OCI-LY7 (cell line): ENCODE measurements at regions of chr2 and their contacts with region 1.

Region 1: GRCh38 chr2:24490674-24491625 is at the start of gene NCOA1:
- DNase-seq: peak; percentile 90
- H3K4me3 ChIP-seq: peak within 1 kb of the TSS; percentile 70
- H3K27ac ChIP-seq: peak within 1 kb of the TSS; percentile 59
- H3K4me1 ChIP-seq: peaks cover 22% of the 10 kb centered on the region
- CTCF ChIP-seq: 0 out of 2 replicates have a peak, but pooled peaks have one; percentile 4
- total RNA-seq, gene NCOA1: 4.3 and 6.1 TPM in 2 replicates

Region 2: DNA sequence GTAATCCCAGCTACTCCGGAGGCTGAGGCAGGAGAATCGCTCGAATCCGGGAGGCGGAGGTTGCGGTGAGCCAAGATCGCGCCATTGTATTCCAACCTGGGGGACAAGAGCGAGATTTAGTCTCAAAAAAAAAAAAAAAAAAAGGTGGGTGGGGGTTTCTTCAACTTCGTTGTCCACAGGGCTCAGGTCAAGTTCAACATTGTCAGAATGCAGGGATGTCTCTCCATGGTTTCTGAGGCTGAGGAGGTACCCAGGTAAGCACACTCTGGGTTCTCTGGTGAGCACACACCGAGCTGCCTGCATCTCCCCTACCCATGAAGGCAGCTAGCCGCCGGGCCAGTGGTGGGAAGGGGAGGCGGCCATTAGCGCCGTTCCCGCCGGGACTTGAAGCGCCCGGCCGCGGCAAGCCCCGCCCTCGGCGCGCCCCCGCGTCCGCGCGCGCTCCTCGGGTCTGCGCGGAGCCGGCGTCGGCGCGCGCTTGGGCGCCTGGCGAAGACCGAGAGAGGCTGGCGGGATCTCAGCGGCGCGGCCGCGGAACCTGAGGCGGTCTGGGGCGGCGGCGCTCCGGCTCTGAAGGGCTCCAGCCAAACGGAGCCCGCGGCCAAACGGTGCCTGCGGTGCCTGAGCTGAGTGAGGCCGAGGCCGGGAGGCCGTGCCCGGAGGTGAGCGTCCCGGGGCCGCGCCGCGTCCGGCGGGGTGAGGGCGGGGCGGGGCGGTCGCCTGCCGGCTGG is 550.8 kb before region 1 on chr2 and contains the start of gene UBXN2A:
- CTCF ChIA-PET with region 1: no interaction called
- POLR2A ChIA-PET with region 1: no interaction called
- intact Hi-C with region 1: loop called (anchors 10 kb)
- DNase-seq: peak; percentile 89
- H3K4me3 ChIP-seq: peak within 1 kb of the TSS; percentile 72
- H3K27ac ChIP-seq: peak within 1 kb of the TSS; percentile 73
- H3K4me1 ChIP-seq: peaks cover 18% of the 10 kb centered on the region
- CTCF ChIP-seq: no peak
- total RNA-seq, gene UBXN2A: 10.0 and 11.3 TPM in 2 replicates

Region 3: GRCh38 chr2:24792874-24793760 is 302.2 kb after region 1 on chr2 and contains the starts of genes CENPO and PTRHD1:
- CTCF ChIA-PET with region 1: no interaction called
- POLR2A ChIA-PET with region 1: interaction called, 4 read pairs
- intact Hi-C with region 1: loop called (anchors 5 kb)
- DNase-seq: peak; percentile 97
- H3K4me3 ChIP-seq: peak within 1 kb of the TSS; percentile 91
- H3K27ac ChIP-seq: peak within 1 kb of the TSS; percentile 82
- H3K4me1 ChIP-seq: peaks cover 30% of the 10 kb centered on the region
- CTCF ChIP-seq: peak; percentile 54
- total RNA-seq, gene CENPO: 52.4 and 53.6 TPM in 2 replicates
- total RNA-seq, gene PTRHD1: 44.8 and 55.0 TPM in 2 replicates

Region 4: DNA sequence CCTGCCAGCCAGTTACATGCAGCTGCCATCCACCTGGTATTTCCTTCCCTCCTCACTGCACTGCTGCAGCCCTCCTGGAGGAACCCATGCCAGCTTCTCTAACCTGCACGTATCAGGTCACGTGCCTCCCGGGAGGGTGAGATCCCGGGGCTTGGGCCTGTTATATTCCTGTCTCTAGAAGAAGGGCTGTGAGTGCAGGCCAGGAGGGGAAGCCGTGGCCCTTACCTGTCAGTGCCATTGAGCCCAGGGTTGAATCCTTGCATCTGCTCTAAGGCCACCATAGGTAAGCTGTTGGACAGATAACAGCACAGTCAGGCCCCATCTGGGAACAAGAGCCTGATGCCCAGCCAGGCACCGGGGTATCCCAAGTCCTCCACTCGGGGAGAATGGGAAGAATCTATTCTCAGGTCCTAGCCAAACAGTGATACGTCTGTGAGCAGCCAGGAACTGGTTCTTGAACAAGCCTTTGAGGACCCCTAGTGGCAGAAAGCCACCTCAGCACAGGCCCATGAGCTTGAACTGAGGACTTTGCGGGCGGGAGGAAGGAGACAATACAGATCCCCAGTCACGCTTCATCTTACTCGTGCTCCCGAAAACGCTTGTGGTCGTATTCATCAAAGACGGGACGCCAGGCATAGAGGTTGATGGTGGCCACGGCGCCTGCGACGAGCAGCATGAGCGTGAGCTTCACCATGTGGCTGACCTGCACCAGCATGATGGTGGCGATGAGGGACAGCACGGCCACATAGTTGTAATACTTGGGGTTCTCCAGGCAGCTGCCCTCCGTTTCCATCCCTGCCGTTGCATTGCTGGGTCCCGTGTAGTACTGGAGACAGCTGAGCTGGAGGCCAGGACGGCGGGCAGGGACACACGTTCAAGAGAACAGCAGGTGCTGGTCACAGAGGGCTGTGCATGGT is 336.6 kb after region 1 on chr2:
- CTCF ChIA-PET with region 1: no interaction called
- POLR2A ChIA-PET with region 1: no interaction called
- intact Hi-C with region 1: loop called (anchors 2 kb)
- DNase-seq: peak; percentile 87
- H3K4me3 ChIP-seq: no peak overlapping the region
- H3K27ac ChIP-seq: peak overlapping the region; percentile 14
- H3K4me1 ChIP-seq: peaks cover 20% of the 10 kb centered on the region
- CTCF ChIP-seq: peak; percentile 91